Breast epithelium (tissue), 4 donors: ENCODE measurements at regions of chr9 and their contacts with region 1.

Region 1: DNA sequence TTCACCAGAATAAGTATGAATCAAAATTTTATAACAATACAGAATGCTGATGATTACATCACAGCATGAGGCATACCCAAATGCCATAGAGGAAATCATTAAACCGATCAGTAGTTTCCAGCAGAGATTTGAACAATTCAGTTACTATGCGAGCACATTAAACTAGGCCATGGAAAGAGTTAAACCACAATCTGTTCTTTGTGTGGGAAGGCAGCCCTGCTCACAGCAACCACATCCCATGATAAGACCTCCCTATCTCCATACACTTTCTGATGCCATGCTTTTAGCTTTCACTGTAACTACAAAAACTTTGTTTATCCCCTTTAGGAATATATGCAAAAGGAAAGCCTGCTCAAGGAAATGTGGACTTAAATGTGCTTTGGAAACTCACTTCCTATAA is 4.5 kb downstream of the NFIB start:
- DNase-seq: no peak
- H3K4me3 ChIP-seq: peak overlapping the region; percentile 73 to 83 (median 79)
- H3K27ac ChIP-seq: peak overlapping the region; percentile 49 to 96
- H3K4me1 ChIP-seq: peaks cover 0 to under 1% of the 10 kb centered on the region in 2 donors
- H3K27me3 ChIP-seq: no peaks in the 10 kb centered on the region
- CTCF ChIP-seq: no peak
- POLR2A ChIP-seq: no peak

Region 2: GRCh38 chr9:14198841-14199455 is 110.5 kb before region 1 on chr9:
- intact Hi-C with region 1: loop called (anchors 5 kb)
- DNase-seq: peak; percentile 60 to 88
- H3K4me3 ChIP-seq: peak overlapping the region in 1 of 3 donors; percentile 24
- H3K27ac ChIP-seq: peak overlapping the region; percentile 46 to 56
- H3K4me1 ChIP-seq: peaks cover 0 to 17% of the 10 kb centered on the region in 2 donors
- H3K27me3 ChIP-seq: no peaks in the 10 kb centered on the region
- CTCF ChIP-seq: no peak
- POLR2A ChIP-seq: no peak